HEK293 (cell line): ENCODE measurements at regions of chr22 and their contacts with region 1.

Region 1: GRCh38 chr22:20931126-20931654 is 14.0 kb downstream of the CRKL start:
- H3K4me3 ChIP-seq: no peak overlapping the region
- H3K27ac ChIP-seq: no peak overlapping the region
- H3K4me1 ChIP-seq: peaks cover 2% of the 10 kb centered on the region; the same call in 1 of the 2 replicates
- CTCF ChIP-seq: no peak

Region 2: DNA sequence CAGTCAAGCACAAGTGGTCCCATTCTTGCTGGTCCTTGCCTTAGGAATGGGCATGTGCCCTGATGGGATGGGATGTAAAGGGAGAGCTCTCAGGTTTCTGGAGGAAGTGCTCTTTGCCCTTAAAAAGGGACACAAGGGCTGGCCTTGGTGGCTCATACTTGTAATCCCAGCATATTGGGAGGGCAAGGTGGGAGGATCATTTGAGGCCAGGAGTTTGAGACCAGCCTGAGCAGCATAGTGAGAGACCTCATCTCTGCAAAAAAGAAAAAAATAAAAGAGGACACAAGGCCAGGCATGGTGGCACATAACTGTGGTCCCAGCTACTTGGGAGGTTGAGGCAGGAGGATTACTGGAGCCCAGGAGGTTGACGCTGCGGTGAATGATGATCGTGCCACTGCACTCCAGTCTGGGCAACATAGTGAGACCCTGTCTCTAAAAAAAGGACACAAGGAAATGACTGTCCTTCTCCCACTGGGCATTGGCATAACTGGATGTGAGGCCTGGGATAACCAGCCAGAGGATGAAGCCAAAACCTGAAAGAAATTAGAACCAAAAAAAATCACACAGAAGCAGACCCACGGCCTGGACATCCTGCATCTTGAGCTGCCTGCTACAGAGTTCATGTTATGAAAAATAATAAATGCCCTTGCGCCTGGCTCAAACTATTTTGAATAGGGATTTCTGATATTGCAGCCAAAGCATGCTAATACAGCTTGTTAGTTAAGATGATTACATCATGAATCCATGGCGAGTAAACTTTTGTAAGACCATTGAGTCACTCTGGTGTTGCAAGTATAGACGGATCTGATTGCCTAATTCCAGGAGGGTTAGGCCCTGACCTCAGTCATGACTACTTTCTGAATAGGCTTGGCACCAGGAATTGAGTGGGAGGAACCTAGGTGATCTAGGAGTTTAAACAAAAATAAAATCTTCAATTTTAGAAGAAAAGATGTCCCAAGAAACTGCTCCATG is 26.9 kb before region 1 on chr22:
- CTCF ChIA-PET with region 1: no interaction called
- POLR2A ChIA-PET with region 1: no interaction called
- H3K4me3 ChIP-seq: no peak overlapping the region
- H3K27ac ChIP-seq: no peak overlapping the region
- H3K4me1 ChIP-seq: no peaks in the 10 kb centered on the region
- CTCF ChIP-seq: no peak

Region 3: DNA sequence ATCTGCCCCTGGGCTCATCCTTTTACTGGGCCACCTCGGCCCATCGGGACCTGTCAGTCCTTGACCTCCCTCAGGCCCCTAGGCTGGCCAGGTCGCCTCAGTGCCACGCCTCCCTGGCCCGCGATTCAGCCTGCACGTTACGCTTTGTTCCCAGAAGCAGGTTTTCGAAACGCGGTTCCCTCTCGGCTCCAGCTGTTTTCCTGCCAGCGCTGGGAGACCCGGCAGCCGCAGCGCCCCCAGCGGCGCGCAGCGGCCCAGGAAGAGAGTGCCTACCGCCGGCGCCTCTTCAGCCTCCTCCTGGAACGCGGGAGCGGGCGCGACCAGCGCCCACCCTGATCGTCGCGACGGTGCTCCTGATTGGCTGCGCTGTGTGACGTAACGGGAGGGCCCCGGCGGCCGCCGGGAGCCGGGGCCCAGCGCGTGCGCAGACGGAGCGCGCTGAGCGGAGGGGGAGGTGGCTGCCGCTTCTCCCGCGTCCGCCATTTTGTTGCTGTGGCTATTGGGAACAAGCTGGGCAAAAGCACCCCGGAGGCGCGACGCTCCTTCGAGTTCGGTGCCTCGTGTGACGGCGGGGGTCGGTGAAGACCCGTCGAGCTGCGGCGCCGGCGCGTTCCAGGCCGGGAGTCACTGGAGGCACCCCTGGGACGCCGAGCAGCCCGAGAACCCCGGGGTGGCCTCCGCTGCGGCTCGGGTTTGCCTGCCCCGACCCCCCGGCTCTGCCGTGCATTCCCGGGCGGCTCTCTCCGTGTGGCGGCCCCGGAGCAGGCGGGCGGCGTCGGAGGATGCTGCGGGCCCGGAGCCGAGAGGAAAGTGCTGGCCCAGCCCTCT is 14.0 kb before region 1 on chr22 and contains the start of gene CRKL:
- CTCF ChIA-PET with region 1: interaction called, 14 read pairs
- POLR2A ChIA-PET with region 1: interaction called, 3 read pairs
- H3K4me3 ChIP-seq: peak within 1 kb of the TSS; percentile 76
- H3K27ac ChIP-seq: peak within 1 kb of the TSS; percentile 82
- H3K4me1 ChIP-seq: peaks cover 4% of the 10 kb centered on the region; the same call in 1 of the 2 replicates
- CTCF ChIP-seq: peak; percentile 98

Region 4: DNA sequence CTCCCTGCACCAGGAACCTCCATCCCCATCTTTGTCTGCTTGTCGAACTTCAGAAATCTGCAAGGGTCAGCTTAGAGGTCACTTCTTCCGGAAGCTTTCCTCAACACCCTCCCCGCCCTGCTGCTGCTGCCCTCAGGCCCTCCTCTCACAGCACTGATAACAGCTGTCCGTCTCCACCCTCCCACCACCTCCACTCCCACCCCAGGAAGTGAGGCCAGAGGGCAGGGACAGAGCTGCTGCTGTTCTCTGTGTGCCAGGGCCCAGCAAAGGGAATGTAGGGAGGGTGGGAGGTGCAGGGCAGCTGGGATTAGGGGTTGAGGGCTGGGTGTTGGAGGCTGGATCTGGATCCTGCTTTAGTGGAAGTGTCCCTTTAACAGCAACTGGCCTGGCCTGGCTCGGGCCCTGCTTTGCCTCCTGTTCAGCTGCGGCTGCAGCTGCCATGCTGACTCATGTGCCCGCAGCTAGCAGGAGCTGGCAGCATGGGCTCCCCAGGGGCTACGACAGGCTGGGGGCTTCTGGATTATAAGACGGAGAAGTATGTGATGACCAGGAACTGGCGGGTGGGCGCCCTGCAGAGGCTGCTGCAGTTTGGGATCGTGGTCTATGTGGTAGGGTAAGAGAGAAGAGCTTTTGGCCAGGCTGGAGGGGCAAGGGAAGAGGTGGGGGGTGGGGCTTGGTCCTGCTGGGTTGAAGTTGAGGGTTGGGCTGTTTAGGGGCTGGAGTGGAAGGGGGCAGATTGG is 83.7 kb after region 1 on chr22 and contains the start of gene P2RX6:
- CTCF ChIA-PET with region 1: no interaction called
- POLR2A ChIA-PET with region 1: no interaction called
- H3K4me3 ChIP-seq: peak within 1 kb of the TSS; percentile 33
- H3K27ac ChIP-seq: no peak within 1 kb of the TSS
- H3K4me1 ChIP-seq: no peaks in the 10 kb centered on the region
- CTCF ChIP-seq: no peak